ENCODE measurements at regions of chr1 and their contacts with region 1.

Region 1: GRCh38 chr1:210584439-210585113 is 255.9 kb downstream of the HHAT start:
- DNase-seq: peak; percentile 78 to 84
- H3K4me3 ChIP-seq: no peak overlapping the region
- H3K4me3 Mint-ChIP-seq: no peak overlapping the region
- H3K27ac Mint-ChIP-seq: no peak overlapping the region
- H3K4me1 ChIP-seq: no peaks in the 10 kb centered on the region
- H3K4me1 Mint-ChIP-seq: peaks cover 7% of the 10 kb centered on the region
- H3K27me3 ChIP-seq: no peaks in the 10 kb centered on the region
- H3K27me3 Mint-ChIP-seq: no peaks in the 10 kb centered on the region
- CTCF ChIP-seq: peak; percentile 73 to 82

Region 2: GRCh38 chr1:210407207-210407886 is 177.2 kb before region 1 on chr1:
- CTCF ChIA-PET with region 1: no interaction called
- POLR2A ChIA-PET with region 1: no interaction called
- intact Hi-C with region 1: loop called (anchors 2 kb)
- DNase-seq: peak; percentile 50 to 82
- H3K4me3 ChIP-seq: no peak overlapping the region
- H3K4me3 Mint-ChIP-seq: no peak overlapping the region
- H3K27ac Mint-ChIP-seq: no peak overlapping the region
- H3K4me1 ChIP-seq: no peaks in the 10 kb centered on the region
- H3K4me1 Mint-ChIP-seq: no peaks in the 10 kb centered on the region
- H3K27me3 ChIP-seq: no peaks in the 10 kb centered on the region
- H3K27me3 Mint-ChIP-seq: no peaks in the 10 kb centered on the region
- CTCF ChIP-seq: peak; percentile 92 to 96

Region 3: GRCh38 chr1:210696709-210697108 is 112.1 kb after region 1 on chr1:
- CTCF ChIA-PET with region 1: no interaction called
- POLR2A ChIA-PET with region 1: no interaction called
- intact Hi-C with region 1: loop called (anchors 10 kb)
- DNase-seq: no peak
- H3K4me3 ChIP-seq: no peak overlapping the region
- H3K4me3 Mint-ChIP-seq: no peak overlapping the region
- H3K27ac Mint-ChIP-seq: no peak overlapping the region
- H3K4me1 ChIP-seq: no peaks in the 10 kb centered on the region
- H3K4me1 Mint-ChIP-seq: no peaks in the 10 kb centered on the region
- H3K27me3 ChIP-seq: no peaks in the 10 kb centered on the region
- H3K27me3 Mint-ChIP-seq: peaks cover 14% of the 10 kb centered on the region
- CTCF ChIP-seq: no peak

Region 4: GRCh38 chr1:210951279-210951678 is 366.7 kb after region 1 on chr1:
- CTCF ChIA-PET with region 1: no interaction called
- POLR2A ChIA-PET with region 1: no interaction called
- intact Hi-C with region 1: loop called (anchors 1 kb)
- DNase-seq: no peak
- H3K4me3 ChIP-seq: no peak overlapping the region
- H3K4me3 Mint-ChIP-seq: no peak overlapping the region
- H3K27ac Mint-ChIP-seq: no peak overlapping the region
- H3K4me1 ChIP-seq: no peaks in the 10 kb centered on the region
- H3K4me1 Mint-ChIP-seq: no peaks in the 10 kb centered on the region
- H3K27me3 ChIP-seq: no peaks in the 10 kb centered on the region
- H3K27me3 Mint-ChIP-seq: peaks cover 17% of the 10 kb centered on the region
- CTCF ChIP-seq: no peak